K562 (cell line): ENCODE measurements at regions of chr7 and their contacts with region 1.

Region 1: GRCh38 chr7:131174855-131175254 is 152.8 kb upstream of the MKLN1 start:
- DNase-seq: no peak
- ATAC-seq: no peak
- H3K4me3 ChIP-seq: no peak overlapping the region
- H3K27ac ChIP-seq: no peak overlapping the region
- H3K4me1 ChIP-seq: no peaks in the 10 kb centered on the region
- H3K27me3 ChIP-seq: peaks cover 16 to 32% of the 10 kb centered on the region in 2 experiments
- CTCF ChIP-seq: no peak
- EP300 ChIP-seq: no peak
- POLR2A ChIP-seq: no peak
- RAD21 ChIP-seq: no peak

Region 2: DNA sequence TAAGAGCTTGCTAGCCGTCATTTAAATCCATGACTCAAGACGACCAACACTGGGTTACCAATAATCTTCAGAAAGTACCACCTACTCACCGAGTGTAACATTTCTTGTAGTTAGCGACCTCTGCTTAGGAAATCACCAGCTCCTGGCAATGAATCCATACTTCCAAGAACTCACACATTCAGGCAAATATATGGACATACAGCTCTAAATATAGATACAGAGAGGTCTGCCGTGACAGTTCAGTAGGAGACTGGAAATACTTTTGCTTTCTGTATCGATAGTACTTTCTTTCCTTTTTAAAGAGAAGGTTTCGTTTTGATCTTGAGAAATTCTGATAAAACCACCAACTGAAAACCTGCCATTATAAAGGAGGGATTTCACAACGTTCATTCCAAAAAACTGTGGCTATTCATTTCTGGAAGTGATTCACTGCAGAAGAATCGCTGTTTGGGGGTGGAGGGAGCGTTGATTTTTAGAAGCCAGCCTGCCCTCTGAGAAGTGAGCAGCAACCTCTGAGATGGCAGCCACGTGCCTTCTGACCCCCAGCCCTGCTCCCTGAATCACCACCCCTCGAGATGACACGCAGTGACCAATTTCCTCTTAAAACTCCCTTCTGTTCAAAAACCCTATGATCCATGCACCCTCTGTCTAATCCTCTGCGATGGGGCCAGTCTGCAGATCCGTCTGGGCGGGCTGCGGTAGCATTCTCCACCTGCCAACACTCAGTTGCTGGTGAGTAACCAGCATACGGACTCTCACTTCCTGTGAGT is 261.8 kb before region 1 on chr7:
- CTCF ChIA-PET with region 1: no interaction called
- POLR2A ChIA-PET with region 1: no interaction called
- in situ Hi-C with region 1: no loop called
- intact Hi-C with region 1: no loop called
- DNase-seq: peak in 3 of 4 experiments; percentile 35 to 67 (median 55)
- ATAC-seq: peak; percentile 62
- H3K4me3 ChIP-seq: peak overlapping the region; percentile 35
- H3K27ac ChIP-seq: peak overlapping the region; percentile 76
- H3K4me1 ChIP-seq: peaks cover 17 to 64% of the 10 kb centered on the region in 2 experiments
- H3K27me3 ChIP-seq: no peaks in the 10 kb centered on the region
- CTCF ChIP-seq: no peak
- EP300 ChIP-seq: no peak
- POLR2A ChIP-seq: peak; percentile 59; the same call in 1 of the 2 replicates
- RAD21 ChIP-seq: no peak

Region 3: GRCh38 chr7:131164025-131164899 is 10.6 kb before region 1 on chr7:
- CTCF ChIA-PET with region 1: no interaction called
- POLR2A ChIA-PET with region 1: interaction called, 17 read pairs
- in situ Hi-C with region 1: no loop called
- intact Hi-C with region 1: no loop called
- DNase-seq: no peak
- ATAC-seq: no peak
- H3K4me3 ChIP-seq: no peak overlapping the region
- H3K27ac ChIP-seq: no peak overlapping the region
- H3K4me1 ChIP-seq: no peaks in the 10 kb centered on the region
- H3K27me3 ChIP-seq: peaks cover 32 to 35% of the 10 kb centered on the region in 2 experiments
- CTCF ChIP-seq: no peak
- EP300 ChIP-seq: no peak
- POLR2A ChIP-seq: no peak
- RAD21 ChIP-seq: no peak

Region 4: GRCh38 chr7:131272086-131272485 is 97.2 kb after region 1 on chr7:
- CTCF ChIA-PET with region 1: no interaction called
- POLR2A ChIA-PET with region 1: no interaction called
- in situ Hi-C with region 1: no loop called
- intact Hi-C with region 1: no loop called
- DNase-seq: no peak
- ATAC-seq: no peak
- H3K4me3 ChIP-seq: no peak overlapping the region
- H3K27ac ChIP-seq: no peak overlapping the region
- H3K4me1 ChIP-seq: no peaks in the 10 kb centered on the region
- H3K27me3 ChIP-seq: peaks cover 7 to 17% of the 10 kb centered on the region in 2 experiments; a peak in 4 of 5 replicates
- CTCF ChIP-seq: no peak
- EP300 ChIP-seq: no peak
- POLR2A ChIP-seq: no peak
- RAD21 ChIP-seq: no peak